Vagina (tissue), 2 donors: ENCODE measurements at regions of chr3 and their contacts with region 1.

Region 1: DNA sequence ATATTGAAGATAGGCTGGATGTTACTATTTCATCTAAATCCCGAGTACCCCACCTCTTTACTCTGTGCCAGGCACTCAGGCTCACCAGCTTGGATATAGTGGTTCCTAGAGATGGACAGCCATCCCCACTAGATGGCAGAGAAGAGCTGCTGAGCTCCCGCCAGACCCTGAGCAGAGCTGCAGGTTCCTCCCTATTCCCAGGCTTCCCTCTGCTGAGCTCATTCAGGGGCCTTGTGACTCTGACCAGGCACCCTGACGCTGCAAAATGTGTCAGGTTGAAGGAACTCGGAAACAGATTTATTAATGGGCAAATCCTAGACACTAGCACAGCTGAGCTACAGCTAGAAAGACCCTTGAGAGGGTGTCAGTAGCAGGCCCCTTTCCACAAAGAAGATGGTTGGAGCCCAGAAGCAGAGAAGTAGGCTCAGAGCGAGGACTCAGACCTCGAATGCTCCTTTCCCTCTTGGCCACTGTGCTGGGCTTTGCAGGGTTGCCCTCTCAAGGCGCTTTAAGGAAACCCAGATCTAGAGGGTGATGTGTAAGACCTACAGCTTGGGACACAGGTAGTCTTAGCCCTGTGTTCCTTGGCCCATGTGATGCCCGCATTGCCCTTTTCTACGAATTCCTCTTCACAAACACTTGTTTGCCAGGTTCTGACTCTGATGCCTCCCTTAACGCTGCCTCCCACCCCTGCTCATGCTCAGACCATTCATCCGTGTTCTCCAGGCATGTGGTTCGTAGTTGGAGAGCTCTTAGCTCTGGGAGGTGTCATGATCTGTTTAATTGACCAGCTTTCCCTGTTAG is 38.0 kb upstream of the RHO start:
- DNase-seq: peak in 1 of 2 donors; percentile 98
- H3K4me3 ChIP-seq: no peak overlapping the region
- H3K27ac ChIP-seq: peak overlapping the region; percentile 94
- H3K4me1 ChIP-seq: peaks cover 33% of the 10 kb centered on the region
- H3K27me3 ChIP-seq: no peaks in the 10 kb centered on the region
- CTCF ChIP-seq: peak; percentile 86 to 91 (median 87)
- POLR2A ChIP-seq: no peak

Region 2: DNA sequence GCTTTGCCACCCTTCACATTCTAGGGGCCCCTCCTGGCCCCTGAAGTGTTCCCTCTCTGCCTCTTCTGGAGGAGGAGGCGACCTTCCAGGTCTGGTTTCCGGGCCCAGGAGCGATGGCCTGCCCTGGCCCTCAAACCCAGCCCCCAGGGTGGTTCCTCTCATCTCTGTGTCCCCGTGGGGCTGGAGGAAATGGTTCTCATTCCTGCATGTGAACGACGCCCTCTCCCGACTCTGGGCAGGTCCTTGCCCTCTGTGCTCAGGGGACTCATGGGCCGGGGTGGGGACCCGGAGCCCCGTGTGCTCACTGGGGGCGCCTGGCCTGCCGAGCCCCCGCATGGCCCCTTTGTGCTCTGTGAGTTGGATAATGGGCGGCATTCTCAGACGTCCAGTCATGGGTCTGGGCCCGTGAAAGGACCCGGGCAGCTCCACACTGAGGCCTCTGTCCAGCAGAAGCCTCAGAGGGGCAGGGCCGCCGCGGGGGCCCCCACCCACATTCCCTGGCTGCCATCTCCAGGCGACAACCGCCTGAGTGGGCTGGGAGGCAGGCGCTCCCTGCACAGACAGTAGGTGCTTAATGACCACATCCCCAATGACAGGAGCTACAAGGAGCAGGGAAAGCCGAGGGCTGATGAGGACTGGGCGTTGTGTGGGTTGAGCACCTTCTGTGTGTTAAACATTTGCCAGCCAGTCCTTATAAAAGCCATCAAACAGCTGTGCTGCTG is 121.5 kb after region 1 on chr3:
- intact Hi-C with region 1: loop called (anchors 5 kb)
- DNase-seq: no peak
- H3K4me3 ChIP-seq: no peak overlapping the region
- H3K27ac ChIP-seq: peak overlapping the region; percentile 71
- H3K4me1 ChIP-seq: peaks cover 69% of the 10 kb centered on the region
- H3K27me3 ChIP-seq: no peaks in the 10 kb centered on the region
- CTCF ChIP-seq: no peak
- POLR2A ChIP-seq: no peak